ENCODE measurements at regions of chr1 and their contacts with region 1.

Region 1: GRCh38 chr1:15128520-15129313 is 24.8 kb upstream of the TMEM51 start:
- DNase-seq: peak; percentile 79
- ATAC-seq: peak; percentile 92 to 96
- H3K4me3 ChIP-seq: no peak overlapping the region
- H3K27ac ChIP-seq: no peak overlapping the region
- H3K4me1 ChIP-seq: no peaks in the 10 kb centered on the region
- H3K27me3 ChIP-seq: no peaks in the 10 kb centered on the region
- CTCF ChIP-seq: peak; percentile 92

Region 2: GRCh38 chr1:15272009-15272788 is 143.5 kb after region 1 on chr1:
- intact Hi-C with region 1: loop called (anchors 10 kb)
- DNase-seq: peak; percentile 64
- ATAC-seq: peak; percentile 89 to 91
- H3K4me3 ChIP-seq: no peak overlapping the region
- H3K27ac ChIP-seq: no peak overlapping the region
- H3K4me1 ChIP-seq: peaks cover 6% of the 10 kb centered on the region
- H3K27me3 ChIP-seq: peaks cover 7% of the 10 kb centered on the region
- CTCF ChIP-seq: peak; percentile 83

Region 3: DNA sequence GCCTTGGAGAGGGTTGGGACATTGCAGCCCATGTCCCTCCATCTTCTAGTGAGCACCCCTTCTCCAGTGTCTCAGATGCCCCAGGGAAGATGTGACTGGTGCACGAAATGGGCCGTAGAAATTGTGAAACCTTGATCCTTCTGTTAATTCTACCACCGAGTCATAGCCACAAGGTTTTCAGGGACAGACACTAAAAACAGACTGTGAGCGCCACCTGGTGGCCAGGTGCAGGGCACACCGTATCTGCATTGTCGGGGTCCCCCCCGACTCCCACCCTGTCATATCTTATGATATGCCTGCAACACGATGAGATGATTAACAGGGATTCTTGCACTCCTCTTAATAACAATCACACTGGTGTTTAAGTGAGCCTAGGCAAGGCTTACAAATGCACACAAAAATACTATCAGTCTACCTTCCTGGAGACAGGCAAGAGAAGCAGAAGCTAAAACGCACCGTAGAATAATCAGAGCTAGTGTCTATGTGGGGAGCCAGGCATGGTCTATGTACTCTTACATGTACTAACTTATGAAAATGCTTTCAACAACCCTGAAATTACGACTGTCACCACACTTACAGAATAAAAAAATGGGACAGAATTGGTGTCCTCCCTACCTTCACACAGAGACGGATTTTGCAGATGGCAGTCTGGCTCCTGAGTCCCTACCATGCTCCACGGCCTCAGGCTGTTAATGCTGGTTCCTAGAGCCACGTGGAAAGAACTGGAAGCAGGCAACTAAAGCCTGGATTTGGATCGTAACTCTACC is 176.2 kb after region 1 on chr1:
- intact Hi-C with region 1: loop called (anchors 10 kb)
- DNase-seq: peak; percentile 76
- ATAC-seq: peak; percentile 70 to 79
- H3K4me3 ChIP-seq: no peak overlapping the region
- H3K27ac ChIP-seq: no peak overlapping the region
- H3K4me1 ChIP-seq: no peaks in the 10 kb centered on the region
- H3K27me3 ChIP-seq: no peaks in the 10 kb centered on the region
- CTCF ChIP-seq: peak; percentile 93

Measured in lower lobe of right lung (tissue), 2 donors.